ENCODE measurements at regions of chr20 and their contacts with region 1.

Region 1: GRCh38 chr20:46631212-46631869 is 19.9 kb downstream of the SLC13A3 start:
- DNase-seq: peak; percentile 92 to 97 (median 96)
- H3K4me3 ChIP-seq: no peak overlapping the region
- H3K4me3 Mint-ChIP-seq: peak overlapping the region in 1 of 2 donors; percentile 59
- H3K27ac ChIP-seq: peak overlapping the region in 1 of 2 donors; percentile 20
- H3K27ac Mint-ChIP-seq: peak overlapping the region; percentile 54 to 88 (median 80)
- H3K4me1 ChIP-seq: peaks cover 20 to 24% of the 10 kb centered on the region in 2 donors
- H3K4me1 Mint-ChIP-seq: peaks cover 25% of the 10 kb centered on the region
- H3K27me3 ChIP-seq: no peaks in the 10 kb centered on the region
- H3K27me3 Mint-ChIP-seq: peaks cover 5 to 11% (median 11%) of the 10 kb centered on the region in 3 donors
- CTCF ChIP-seq: no peak

Region 2: GRCh38 chr20:46070215-46070900 is 561.0 kb before region 1 on chr20:
- intact Hi-C with region 1: no loop called
- DNase-seq: no peak
- H3K4me3 ChIP-seq: no peak overlapping the region
- H3K4me3 Mint-ChIP-seq: no peak overlapping the region
- H3K27ac ChIP-seq: no peak overlapping the region
- H3K27ac Mint-ChIP-seq: no peak overlapping the region
- H3K4me1 ChIP-seq: no peaks in the 10 kb centered on the region
- H3K4me1 Mint-ChIP-seq: no peaks in the 10 kb centered on the region
- H3K27me3 ChIP-seq: no peaks in the 10 kb centered on the region
- H3K27me3 Mint-ChIP-seq: no peaks in the 10 kb centered on the region
- CTCF ChIP-seq: no peak

Region 3: DNA sequence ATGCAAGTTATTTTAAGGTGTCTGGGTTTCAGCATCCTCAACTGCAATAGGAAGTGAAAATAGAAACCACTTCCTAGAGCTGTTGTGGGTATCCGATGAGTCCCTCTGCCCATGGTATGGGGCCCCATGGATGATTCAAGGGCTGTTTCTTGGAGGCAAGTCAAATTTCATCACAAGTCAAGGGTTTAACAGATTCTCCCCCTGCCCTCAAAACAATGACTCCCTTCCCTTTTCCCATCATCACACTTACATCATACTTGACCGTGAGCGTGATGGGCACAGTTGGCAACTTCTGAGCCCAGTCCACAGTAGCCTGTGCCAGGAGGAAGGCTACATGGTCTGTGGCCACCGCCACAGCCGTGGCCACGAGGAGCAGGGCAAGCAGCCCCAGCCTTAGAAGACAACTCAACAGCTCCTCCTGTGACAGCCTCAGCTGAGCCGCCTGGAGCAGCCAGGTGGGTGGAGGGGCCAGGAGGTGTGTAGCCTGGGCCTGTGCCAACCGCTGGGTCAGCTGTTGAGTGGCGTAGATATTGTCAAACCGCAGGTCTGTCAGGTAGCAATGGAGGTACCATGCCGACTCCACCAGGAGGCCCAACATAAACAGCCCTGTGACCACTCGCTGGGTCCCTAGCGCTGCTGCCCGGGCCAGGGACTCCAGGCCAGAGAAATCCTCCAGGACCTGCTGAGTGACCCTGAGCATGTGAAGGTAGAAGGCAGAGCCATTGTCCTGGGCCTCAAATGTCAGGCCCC is 86.1 kb before region 1 on chr20:
- intact Hi-C with region 1: loop called in 1 of 2 experiments (anchors 5 kb)
- DNase-seq: peak; percentile 91 to 97 (median 92)
- H3K4me3 ChIP-seq: no peak overlapping the region
- H3K4me3 Mint-ChIP-seq: peak overlapping the region in 1 of 2 donors; percentile 68
- H3K27ac ChIP-seq: peak overlapping the region in 1 of 2 donors; percentile 26
- H3K27ac Mint-ChIP-seq: peak overlapping the region; percentile 61 to 91 (median 76)
- H3K4me1 ChIP-seq: peaks cover 20 to 21% of the 10 kb centered on the region in 2 donors
- H3K4me1 Mint-ChIP-seq: peaks cover 19% of the 10 kb centered on the region
- H3K27me3 ChIP-seq: peaks cover 16 to 44% of the 10 kb centered on the region in 2 donors
- H3K27me3 Mint-ChIP-seq: peaks cover 27 to 30% (median 30%) of the 10 kb centered on the region in 3 donors
- CTCF ChIP-seq: no peak

Region 4: DNA sequence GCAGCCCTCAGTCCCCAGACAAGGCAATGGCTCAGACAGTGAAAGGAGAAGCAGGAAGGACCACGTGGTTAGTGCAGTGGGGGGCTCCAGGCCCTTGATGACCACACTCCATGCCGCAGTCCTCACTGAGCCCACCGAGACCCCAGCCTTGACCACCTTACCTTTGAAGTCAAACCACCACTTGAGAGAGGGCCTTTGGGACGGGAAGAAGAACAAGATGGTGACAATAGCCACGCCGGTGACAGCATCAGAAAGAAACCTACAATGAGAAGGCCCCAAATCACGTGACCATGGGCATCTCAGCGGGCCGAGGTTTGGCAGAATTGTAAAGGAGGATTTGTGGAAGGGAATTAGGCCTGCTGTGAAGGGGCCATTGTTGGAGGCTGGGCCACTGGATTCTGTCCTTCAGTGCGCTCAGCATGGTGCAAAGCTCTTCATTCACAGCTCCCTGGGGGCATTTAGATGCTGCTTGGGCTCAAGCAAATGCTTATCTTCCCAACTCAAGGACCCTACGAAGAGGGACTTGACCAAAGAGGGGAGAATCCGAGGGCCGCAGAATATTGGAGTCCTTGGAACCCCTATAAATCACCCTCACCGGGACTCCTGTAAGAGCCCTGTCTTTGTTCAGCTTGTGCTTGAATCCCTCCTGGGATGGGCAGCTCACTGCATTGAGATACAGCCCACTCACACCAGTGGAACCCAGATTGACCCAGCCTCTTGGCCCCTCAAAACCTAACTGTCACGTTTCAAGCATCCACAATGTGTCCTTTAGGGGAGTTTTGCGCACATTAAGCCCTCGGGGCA is 47.7 kb before region 1 on chr20:
- intact Hi-C with region 1: no loop called
- DNase-seq: no peak
- H3K4me3 ChIP-seq: no peak overlapping the region
- H3K4me3 Mint-ChIP-seq: peak overlapping the region in 1 of 2 donors; percentile 4
- H3K27ac ChIP-seq: no peak overlapping the region
- H3K27ac Mint-ChIP-seq: no peak overlapping the region
- H3K4me1 ChIP-seq: no peaks in the 10 kb centered on the region
- H3K4me1 Mint-ChIP-seq: no peaks in the 10 kb centered on the region
- H3K27me3 ChIP-seq: no peaks in the 10 kb centered on the region
- H3K27me3 Mint-ChIP-seq: peaks cover 0 to 3% (median 3%) of the 10 kb centered on the region in 3 donors
- CTCF ChIP-seq: no peak

Region 5: DNA sequence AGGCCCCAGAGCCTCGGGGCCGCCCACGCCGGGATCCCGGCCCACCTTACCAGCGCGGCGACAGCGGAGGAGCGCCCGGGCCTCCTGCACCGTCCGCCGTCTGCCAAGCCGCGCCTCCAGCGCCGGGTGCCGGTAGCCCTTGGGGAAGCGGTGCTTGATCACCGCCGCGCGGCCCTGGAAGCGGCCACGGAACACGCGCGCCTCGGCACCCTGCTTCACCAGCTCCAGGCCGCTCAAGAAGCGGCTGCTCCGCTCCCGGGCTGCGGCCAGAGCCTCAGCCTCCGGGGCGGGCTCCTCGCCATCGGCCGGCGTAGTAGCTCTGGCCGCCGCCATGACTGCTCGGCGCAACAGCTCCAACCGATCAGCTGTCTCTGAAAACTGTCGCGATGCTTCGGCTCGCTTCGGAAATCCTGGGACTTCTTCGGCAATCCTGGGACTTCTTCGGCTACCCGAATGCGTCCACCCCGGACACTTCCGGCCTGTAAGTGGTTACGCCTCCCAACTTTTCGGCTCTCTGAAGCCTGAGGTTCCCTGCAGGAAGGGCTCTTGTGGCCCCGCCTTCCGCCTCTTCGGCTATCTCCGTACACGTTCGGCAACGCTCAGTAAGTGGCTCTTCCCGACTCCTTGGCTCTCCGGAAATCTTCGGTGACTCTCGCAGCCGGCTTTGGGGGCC is 57.9 kb after region 1 on chr20 and contains the start of gene TP53RK:
- intact Hi-C with region 1: no loop called
- DNase-seq: peak; percentile 96 to 98 (median 98)
- H3K4me3 ChIP-seq: peak within 1 kb of the TSS; percentile 48 to 80 (median 72)
- H3K4me3 Mint-ChIP-seq: peak within 1 kb of the TSS; percentile 90 to 93
- H3K27ac ChIP-seq: peak within 1 kb of the TSS; percentile 73 to 82
- H3K27ac Mint-ChIP-seq: peak within 1 kb of the TSS; percentile 88 to 95 (median 94)
- H3K4me1 ChIP-seq: peaks cover 19 to 30% of the 10 kb centered on the region in 2 donors
- H3K4me1 Mint-ChIP-seq: peaks cover 47% of the 10 kb centered on the region
- H3K27me3 ChIP-seq: no peaks in the 10 kb centered on the region
- H3K27me3 Mint-ChIP-seq: no peaks in the 10 kb centered on the region
- CTCF ChIP-seq: peak; percentile 29
- polyA plus RNA-seq, gene TP53RK: 1.4 to 10.9 (median 9.5) TPM